ENCODE measurements at regions of chrX and their contacts with region 1.

Region 1: DNA sequence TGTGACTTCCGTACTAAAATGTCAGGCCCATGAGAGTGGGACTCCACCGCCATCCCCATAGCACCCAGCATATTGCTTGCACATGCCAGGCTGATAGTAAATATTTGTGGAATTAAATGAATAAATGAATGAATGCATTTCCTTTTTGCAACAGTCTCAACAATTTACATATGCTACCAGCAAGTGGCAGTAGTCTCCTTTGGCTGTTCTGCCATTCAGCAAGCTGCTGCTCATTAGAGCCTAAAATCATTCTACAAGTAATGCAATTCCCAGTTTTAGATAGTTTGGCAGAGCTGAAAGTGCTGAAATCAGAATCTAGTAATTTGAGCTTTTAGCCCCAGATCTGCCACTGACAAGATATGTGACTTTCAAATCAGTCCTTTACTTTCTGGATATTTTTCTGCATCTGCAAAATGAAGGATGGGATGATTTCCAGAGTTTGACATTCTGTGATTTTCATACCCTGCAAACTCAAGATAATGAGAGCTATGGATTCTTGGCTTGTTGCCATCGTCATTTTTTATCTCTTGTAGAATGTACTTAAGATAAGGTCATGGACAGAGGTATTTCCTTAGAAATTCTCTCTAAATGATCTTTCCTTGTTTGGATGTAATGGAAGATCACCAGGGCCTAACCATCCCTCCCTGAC is 35.7 kb upstream of the INTS6L start:
- DNase-seq: no peak
- H3K4me3 ChIP-seq: no peak overlapping the region
- H3K27ac ChIP-seq: no peak overlapping the region
- H3K4me1 ChIP-seq: no peaks in the 10 kb centered on the region
- H3K27me3 ChIP-seq: no peaks in the 10 kb centered on the region
- CTCF ChIP-seq: peak; percentile 42 to 60 (median 47)
- EP300 ChIP-seq: no peak
- POLR2A ChIP-seq: no peak

Region 2: DNA sequence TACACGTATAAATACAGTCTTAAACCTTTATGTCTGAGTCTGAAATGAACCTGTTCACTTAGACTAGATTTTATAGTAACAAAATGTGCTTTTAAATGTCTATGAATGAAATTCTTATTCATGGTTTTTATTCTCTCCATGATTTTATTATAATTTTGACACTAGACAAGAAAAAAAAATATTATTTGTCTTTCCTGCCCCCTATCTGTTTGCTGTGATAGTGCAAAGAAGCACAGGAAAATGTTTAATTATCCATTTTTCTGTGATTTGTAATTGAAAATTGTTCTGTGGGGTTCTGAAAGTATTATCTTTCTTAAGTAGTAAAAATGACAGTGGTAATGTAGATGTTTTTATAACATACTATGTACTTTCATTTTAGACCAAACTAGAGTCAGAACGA is 87.7 kb after region 1 on chrX:
- intact Hi-C with region 1: loop called (anchors 5 kb)
- DNase-seq: no peak
- H3K4me3 ChIP-seq: no peak overlapping the region
- H3K27ac ChIP-seq: no peak overlapping the region
- H3K4me1 ChIP-seq: no peaks in the 10 kb centered on the region
- H3K27me3 ChIP-seq: no peaks in the 10 kb centered on the region
- CTCF ChIP-seq: peak; percentile 41 to 48 (median 41)
- EP300 ChIP-seq: no peak
- POLR2A ChIP-seq: no peak

Measured in esophagus muscularis mucosa (tissue), 4 donors.